ENCODE measurements at regions of chr6 and their contacts with region 1.

Region 1: DNA sequence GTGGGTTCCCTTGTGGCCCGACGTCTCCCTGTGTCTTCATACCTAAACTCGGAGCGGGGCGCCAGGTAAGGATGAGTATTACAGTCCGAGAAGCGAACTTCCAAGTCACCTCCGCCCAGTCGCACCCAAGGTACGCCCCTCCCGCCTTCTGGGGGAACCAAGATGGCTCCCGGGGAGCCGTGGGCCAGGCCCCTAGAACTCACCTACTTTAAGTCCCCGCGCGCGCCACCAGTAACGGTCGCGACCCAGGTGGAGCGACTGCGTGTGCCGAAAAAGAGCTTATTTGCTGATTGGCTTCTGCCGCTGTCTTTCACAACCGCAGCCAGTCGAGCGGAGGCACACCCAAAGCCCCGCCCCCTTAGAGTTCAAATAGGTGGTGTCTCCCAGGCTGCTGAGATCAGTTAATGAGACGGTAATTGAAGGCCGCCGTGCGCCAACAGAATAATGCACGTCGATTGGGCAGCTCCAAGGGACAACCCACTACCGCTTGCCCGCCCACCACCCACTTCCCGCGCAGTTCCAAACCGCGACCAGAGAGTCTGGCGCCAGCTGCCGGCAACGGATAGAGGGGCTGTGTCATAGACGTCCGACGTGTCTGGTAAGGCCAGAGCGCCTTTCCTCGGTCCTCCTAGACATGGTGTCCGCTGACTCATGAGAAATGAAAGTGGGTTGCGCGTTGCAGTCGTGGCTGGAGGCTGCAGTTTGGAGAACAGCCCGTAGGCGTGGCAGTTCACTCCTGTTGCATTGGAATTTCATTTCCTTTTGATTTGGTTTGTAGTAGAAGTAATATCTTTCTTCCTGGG is at the start of gene MDC1:
- DNase-seq: peak; percentile 100
- H3K4me3 ChIP-seq: peak within 1 kb of the TSS; percentile 85
- H3K27ac ChIP-seq: peak within 1 kb of the TSS; percentile 95
- H3K27me3 ChIP-seq: no peaks in the 10 kb centered on the region
- CTCF ChIP-seq: peak; percentile 35
- polyA plus RNA-seq, gene MDC1: 4.1 and 6.8 TPM in 2 replicates

Region 2: GRCh38 chr6:30672445-30673253 is 44.6 kb before region 1 on chr6 and contains the start of gene DHX16:
- CTCF ChIA-PET with region 1: interaction called, 105 read pairs
- POLR2A ChIA-PET with region 1: interaction called, 5 read pairs
- DNase-seq: peak; percentile 96
- H3K4me3 ChIP-seq: peak within 1 kb of the TSS; percentile 98
- H3K27ac ChIP-seq: peak within 1 kb of the TSS; percentile 31
- H3K27me3 ChIP-seq: no peaks in the 10 kb centered on the region
- CTCF ChIP-seq: peak; percentile 93
- polyA plus RNA-seq, gene DHX16: 27.6 and 31.9 TPM in 2 replicates

Region 3: GRCh38 chr6:30686908-30687658 is 30.2 kb before region 1 on chr6:
- CTCF ChIA-PET with region 1: interaction called, 105 read pairs
- POLR2A ChIA-PET with region 1: interaction called, 43 read pairs
- DNase-seq: peak; percentile 92
- H3K4me3 ChIP-seq: peak overlapping the region; percentile 92
- H3K27ac ChIP-seq: peak overlapping the region; percentile 99
- H3K27me3 ChIP-seq: no peaks in the 10 kb centered on the region
- CTCF ChIP-seq: no peak

Region 4: DNA sequence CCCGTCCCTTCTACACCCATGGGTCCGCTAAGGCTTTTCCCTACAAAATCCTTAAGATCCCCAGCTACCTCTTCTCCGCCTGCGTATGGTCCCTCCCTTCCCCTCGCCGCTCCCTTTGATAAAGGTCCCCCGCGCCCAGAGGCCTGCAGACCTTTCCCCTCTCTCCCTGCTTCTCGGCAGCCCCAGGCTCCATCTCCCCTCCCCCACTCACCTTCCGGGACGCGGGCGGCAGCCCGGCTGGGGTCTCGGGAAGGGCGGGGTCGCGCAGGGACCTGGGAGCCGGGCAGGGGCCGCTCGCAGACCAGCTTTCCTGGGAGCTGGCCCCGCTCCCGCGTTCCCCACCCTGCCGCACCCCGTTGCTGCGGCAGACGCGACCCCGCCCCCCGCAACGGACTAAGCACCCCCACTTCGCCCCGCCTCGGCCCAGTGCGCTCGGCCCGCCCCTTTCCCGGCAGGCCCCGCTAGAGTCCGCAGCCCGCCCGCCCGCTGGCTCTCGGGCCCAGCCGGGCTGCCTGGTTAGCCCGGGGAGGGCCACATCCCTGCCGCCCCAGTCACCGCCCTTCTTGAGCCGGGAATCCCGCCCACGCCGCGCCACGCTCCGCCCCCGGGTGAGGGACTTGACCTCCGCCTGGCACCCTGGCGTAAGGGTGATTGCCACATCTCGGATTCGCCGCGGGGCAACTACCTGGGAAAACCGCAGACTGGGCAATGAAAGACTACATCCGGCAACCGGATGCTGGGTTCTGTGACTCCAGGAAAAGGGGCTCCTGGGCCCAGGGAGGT is 25.3 kb after region 1 on chr6 and contains the start of gene FLOT1:
- CTCF ChIA-PET with region 1: interaction called, 15 read pairs
- POLR2A ChIA-PET with region 1: interaction called, 4 read pairs
- DNase-seq: peak; percentile 84
- H3K4me3 ChIP-seq: peak within 1 kb of the TSS; percentile 94
- H3K27ac ChIP-seq: peak within 1 kb of the TSS; percentile 93
- H3K27me3 ChIP-seq: no peaks in the 10 kb centered on the region
- CTCF ChIP-seq: no peak
- polyA plus RNA-seq, gene FLOT1: 155 and 156 TPM in 2 replicates

Measured in AG04450 (cell line).